ENCODE measurements at regions of chr12 and their contacts with region 1.

Region 1: GRCh38 chr12:51441583-51441982 is 17.0 kb downstream of the SLC4A8 start:
- DNase-seq: peak in 6 of 10 donors; percentile 43 to 72 (median 63)
- H3K4me3 ChIP-seq: no peak overlapping the region
- H3K27ac ChIP-seq: peak overlapping the region in 57 of 59 donors; percentile 34 to 94 (median 83)
- H3K27me3 ChIP-seq: no peaks in the 10 kb centered on the region
- CTCF ChIP-seq: no peak

Region 2: GRCh38 chr12:51293696-51294095 is 147.9 kb before region 1 on chr12:
- intact Hi-C with region 1: no loop called
- DNase-seq: no peak
- H3K4me3 ChIP-seq: no peak overlapping the region
- H3K27ac ChIP-seq: no peak overlapping the region
- H3K27me3 ChIP-seq: no peaks in the 10 kb centered on the region
- CTCF ChIP-seq: no peak

Region 3: DNA sequence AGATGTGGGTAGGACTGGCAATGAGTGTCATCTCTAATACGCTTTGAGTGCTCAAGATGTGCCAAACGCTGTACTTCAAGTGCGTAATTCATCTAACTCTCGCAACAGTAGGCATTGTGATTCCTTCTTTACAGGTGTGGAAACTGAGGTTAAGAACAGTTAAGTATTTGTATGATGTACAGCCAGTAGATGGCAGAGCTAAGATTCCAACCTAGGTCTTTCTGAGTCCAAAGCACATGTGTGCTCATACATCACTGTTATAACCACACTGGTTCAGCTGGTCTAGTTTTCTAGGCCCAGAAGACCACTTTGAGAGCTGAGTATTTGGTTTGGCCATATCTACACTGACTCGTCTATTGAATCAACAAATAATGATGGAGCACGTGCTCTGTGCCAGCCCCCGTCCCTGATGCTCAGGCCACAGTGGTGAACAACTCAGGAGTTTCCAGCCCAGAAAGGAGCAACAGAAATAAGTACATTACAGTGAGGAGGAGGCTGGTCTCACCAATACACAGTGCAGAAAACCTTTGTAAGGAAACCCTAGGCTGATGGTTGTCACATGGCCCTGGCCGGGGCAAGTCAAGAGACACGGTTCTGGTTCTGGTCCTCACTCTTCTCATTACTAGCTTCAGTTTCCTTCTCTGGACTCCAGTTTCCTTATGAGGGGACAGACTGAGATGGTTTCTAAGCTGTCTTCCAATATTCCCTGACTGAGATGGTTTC is 80.1 kb after region 1 on chr12:
- intact Hi-C with region 1: loop called in 1 of 2 experiments (anchors 5 kb)
- DNase-seq: no peak
- H3K4me3 ChIP-seq: no peak overlapping the region
- H3K27ac ChIP-seq: peak overlapping the region in 40 of 59 donors; percentile 5 to 84 (median 63)
- H3K27me3 ChIP-seq: no peaks in the 10 kb centered on the region
- CTCF ChIP-seq: peak in 28 of 56 donors; percentile 6 to 41 (median 22)

Region 4: GRCh38 chr12:51531978-51532497 is 90.5 kb after region 1 on chr12:
- intact Hi-C with region 1: no loop called
- DNase-seq: peak; percentile 52 to 85 (median 74)
- H3K4me3 ChIP-seq: peak overlapping the region in 2 of 59 donors; percentile 6 to 15
- H3K27ac ChIP-seq: no peak overlapping the region
- H3K27me3 ChIP-seq: peaks cover 0 to under 1% (median 0%) of the 10 kb centered on the region in 45 donors
- CTCF ChIP-seq: peak; percentile 59 to 94 (median 86)